Cardiac septum (tissue), 1 donor: ENCODE measurements at regions of chr9 and their contacts with region 1.

Region 1: GRCh38 chr9:107465467-107466451 is 23.8 kb downstream of the KLF4 start:
- DNase-seq: peak; percentile 88

Region 2: DNA sequence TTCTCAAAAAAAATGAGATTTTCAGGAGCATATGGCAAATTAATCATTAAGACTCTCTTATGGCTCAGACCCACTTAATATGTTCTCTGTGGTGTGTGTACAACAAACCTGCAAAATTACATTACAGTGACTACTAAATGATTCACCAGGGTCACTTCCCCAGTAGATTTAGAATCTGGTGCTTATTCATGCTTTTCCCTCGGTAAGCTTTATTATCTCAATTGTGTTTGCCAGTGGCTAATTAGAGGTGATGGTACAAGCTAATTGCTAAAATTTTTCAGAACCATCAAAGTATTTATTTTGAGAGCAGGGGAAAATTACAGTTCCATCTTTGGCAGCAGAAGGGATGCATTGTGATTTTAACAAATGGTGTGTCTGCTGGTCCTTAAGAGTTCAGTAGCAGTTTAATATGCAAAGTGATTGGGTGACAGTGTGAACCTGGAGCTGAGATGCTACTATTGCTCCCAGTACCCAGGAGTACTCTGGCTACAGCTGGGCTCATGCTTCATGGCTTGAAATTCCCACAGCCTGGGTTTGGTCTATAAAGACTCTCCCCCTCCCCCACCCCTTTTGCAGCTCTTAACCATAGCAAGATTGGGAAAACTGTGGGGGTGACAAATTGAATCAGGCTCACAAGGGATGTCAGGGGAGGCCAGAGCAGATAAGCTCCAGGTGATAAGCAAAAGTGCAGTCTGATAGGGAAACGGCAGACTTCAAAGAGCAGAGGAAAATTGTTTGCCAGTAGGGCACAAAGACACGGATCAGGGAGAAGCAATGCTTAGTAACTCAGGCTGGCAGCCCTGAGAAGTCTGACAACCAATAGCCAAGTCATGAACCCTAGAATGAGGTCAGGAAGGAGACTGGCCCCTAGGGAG is 275.5 kb before region 1 on chr9:
- intact Hi-C with region 1: no loop called
- DNase-seq: no peak

Region 3: DNA sequence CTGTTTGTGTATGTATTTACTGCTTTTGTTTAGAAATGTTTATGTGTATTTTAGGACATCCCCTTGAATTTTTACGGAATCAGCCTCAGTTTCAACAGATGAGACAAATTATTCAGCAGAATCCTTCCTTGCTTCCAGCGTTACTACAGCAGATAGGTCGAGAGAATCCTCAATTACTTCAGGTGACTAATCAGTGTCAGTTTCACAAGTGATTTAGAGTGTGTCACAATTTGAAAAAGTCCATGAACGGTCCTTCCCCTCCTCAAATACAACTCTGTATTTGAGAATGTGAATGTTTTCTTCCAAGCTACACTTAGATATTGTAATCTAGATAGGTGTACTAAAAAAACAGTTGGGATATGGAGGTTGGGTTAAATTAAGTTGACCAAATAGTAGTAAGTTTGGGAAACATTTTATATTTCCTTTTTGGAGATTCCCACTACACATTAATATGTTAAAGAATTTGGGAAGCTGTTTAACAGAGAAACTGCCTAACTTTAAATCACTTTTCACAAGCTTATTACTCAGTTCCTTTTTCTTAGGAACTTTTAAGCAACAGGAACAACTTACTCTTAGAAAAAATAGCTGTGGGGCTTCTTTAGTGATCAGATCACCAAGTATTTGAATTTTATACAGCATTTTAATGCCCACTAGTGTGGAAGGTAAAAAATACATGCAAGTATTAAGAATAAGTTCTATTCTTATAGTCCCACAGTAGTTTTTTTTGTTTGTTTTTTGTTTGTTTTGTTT is 141.7 kb before region 1 on chr9:
- intact Hi-C with region 1: no loop called
- DNase-seq: no peak

Region 4: DNA sequence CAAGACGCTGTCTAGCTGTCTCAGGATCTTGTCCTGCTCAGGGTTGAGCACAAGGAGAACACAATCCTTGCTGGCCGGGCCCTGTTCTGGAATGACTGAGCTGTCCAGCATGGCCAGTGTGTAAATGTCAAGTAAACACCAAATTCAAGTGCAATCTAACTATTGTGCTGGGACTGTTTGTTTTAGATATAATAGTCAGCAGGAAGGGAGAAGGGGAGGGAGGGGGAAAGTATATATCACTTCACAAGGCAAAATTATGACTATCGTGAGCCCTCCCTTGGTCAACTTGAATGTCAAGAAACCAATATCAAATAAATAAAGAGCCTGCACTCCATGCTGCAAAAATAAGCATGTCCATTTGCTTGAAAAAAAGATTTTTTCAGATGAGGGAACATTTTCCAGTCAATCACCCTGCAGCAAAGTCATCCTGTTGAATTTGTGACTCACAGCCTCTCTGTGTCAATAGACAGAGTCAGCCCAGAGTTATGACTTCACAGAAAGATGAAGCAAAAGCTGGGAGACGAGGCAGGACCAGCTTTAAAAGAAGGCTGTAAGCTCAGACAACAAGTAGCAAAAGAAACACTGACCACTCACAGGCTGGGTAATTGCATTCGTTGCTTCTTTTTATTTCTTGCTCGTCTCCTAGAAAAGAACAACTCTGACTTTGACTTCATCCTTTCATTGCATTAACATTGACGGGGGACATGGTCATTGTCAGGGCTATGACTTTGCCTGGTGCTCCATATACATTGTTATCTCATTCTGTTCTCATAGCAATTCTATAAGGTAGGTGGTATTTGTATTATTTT is 39.0 kb after region 1 on chr9:
- intact Hi-C with region 1: no loop called
- DNase-seq: no peak

Region 5: DNA sequence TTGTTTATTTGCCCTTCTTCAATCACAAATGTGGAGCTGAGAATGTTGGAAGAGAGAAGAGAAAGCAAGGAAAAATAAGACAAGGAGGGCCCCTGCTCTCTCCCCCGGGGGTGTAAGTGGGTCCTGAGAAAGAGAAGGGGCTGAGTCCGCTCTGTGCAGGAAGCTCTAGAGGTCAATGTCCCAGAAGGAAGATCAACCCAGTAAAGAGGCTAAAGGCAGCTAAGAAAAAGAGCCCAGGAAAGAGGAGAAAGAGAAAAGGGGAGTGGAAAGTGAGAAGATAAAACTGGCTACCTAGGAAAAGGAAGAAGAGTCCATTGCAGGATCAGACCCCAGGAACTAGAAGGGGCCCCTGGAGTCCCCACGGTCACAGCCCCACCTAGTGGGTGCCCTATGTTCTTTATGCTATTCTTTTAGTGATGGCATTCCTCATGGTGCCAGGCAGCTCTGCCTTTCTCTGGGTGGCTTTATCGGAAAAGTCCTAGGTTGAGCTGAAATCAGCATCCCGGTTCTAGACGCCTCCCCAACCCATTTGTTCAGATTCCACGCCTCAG is 806.7 kb after region 1 on chr9:
- intact Hi-C with region 1: loop called (anchors 5 kb)
- DNase-seq: no peak